ENCODE measurements at regions of chr2 and their contacts with region 1.

Region 1: DNA sequence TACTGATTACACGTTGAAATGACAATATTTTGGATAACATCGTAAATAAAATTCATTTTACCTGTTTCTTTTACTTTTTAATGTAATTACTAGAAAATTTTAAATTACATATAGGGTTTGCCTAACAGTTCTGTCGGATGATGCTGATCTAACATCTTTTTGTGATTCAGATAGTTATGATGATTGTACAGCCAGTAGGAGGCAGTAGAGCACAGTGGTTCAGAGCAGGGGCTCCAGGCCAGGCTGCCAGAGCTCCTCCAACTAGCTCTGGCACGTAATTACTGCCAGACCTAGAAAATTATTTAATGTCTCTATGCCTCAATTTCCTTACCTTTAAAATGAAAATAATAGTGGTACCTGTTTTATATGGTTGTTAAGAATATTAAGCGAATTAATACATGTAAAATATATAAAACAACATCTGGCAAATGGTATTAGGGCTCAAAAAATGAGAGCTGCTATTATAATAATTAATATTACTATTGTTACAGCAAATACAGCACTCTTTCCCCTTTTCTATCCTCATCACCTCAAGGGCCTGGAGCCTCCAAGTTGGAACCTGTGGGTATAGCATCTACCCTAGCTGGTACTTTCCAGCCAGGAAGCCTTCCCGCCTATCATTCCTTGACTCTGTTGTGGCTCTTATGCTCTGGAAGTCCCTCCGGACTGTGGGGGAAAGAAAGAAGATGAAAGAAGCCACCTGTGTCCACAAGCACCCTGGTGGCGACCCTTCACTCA is 47.7 kb upstream of the PLA2R1 start:
- DNase-seq: no peak
- H3K4me3 ChIP-seq: no peak overlapping the region
- H3K27ac ChIP-seq: no peak overlapping the region
- H3K4me1 ChIP-seq: no peaks in the 10 kb centered on the region
- H3K27me3 ChIP-seq: no peaks in the 10 kb centered on the region
- CTCF ChIP-seq: peak; percentile 80 to 82 (median 80)
- EP300 ChIP-seq: no peak
- POLR2A ChIP-seq: no peak

Region 2: DNA sequence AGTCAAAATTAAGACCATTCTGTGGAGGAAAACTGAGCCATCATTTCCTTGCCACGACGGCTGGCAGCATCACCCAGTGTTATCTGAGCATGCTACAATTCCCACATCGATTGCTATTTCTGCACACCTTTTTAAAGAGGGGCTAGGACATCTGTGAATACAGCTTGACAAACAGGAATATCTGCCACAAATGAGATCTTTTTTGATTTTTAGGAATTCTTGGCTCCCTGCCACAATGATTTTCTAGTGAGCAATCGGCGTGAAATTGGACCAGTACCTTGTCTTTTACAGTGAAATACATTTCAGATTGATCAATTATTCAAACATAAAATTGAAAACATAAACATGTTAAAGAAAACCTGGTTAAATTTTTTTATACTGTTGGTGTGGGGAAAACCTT is 160.3 kb before region 1 on chr2:
- intact Hi-C with region 1: no loop called
- DNase-seq: no peak
- H3K4me3 ChIP-seq: no peak overlapping the region
- H3K27ac ChIP-seq: no peak overlapping the region
- H3K4me1 ChIP-seq: peaks cover 4 to 9% (median 6%) of the 10 kb centered on the region in 4 donors
- H3K27me3 ChIP-seq: no peaks in the 10 kb centered on the region
- CTCF ChIP-seq: no peak
- EP300 ChIP-seq: no peak
- POLR2A ChIP-seq: no peak

Region 3: GRCh38 chr2:159960383-159960782 is 149.7 kb before region 1 on chr2:
- intact Hi-C with region 1: no loop called
- DNase-seq: no peak
- H3K4me3 ChIP-seq: no peak overlapping the region
- H3K27ac ChIP-seq: no peak overlapping the region
- H3K4me1 ChIP-seq: no peaks in the 10 kb centered on the region
- H3K27me3 ChIP-seq: no peaks in the 10 kb centered on the region
- CTCF ChIP-seq: no peak
- EP300 ChIP-seq: no peak
- POLR2A ChIP-seq: no peak

Region 4: GRCh38 chr2:160199683-160200389 is 89.7 kb after region 1 on chr2 and contains the start of gene ITGB6:
- intact Hi-C with region 1: no loop called
- DNase-seq: no peak
- H3K4me3 ChIP-seq: no peak within 1 kb of the TSS
- H3K27ac ChIP-seq: no peak within 1 kb of the TSS
- H3K4me1 ChIP-seq: no peaks in the 10 kb centered on the region
- H3K27me3 ChIP-seq: no peaks in the 10 kb centered on the region
- CTCF ChIP-seq: no peak
- EP300 ChIP-seq: no peak
- POLR2A ChIP-seq: no peak
- total RNA-seq, gene ITGB6: 0.17 to 3.4 TPM in 2 of 4 donors, not detected in the others

Region 5: GRCh38 chr2:160210599-160211138 is 100.6 kb after region 1 on chr2:
- intact Hi-C with region 1: loop called (anchors 10 kb)
- DNase-seq: no peak
- H3K4me3 ChIP-seq: no peak overlapping the region
- H3K27ac ChIP-seq: no peak overlapping the region
- H3K4me1 ChIP-seq: peaks cover 21 to 38% (median 32%) of the 10 kb centered on the region in 4 donors
- H3K27me3 ChIP-seq: no peaks in the 10 kb centered on the region
- CTCF ChIP-seq: peak; percentile 25 to 51 (median 30)
- EP300 ChIP-seq: no peak
- POLR2A ChIP-seq: no peak

Region 6: GRCh38 chr2:160994141-160995002 is 884.3 kb after region 1 on chr2:
- intact Hi-C with region 1: loop called (anchors 5 kb)
- DNase-seq: peak; percentile 96
- H3K4me3 ChIP-seq: peak overlapping the region in 2 of 4 donors; percentile 5 to 15
- H3K27ac ChIP-seq: no peak overlapping the region
- H3K4me1 ChIP-seq: peaks cover 7 to 19% (median 9%) of the 10 kb centered on the region in 4 donors
- H3K27me3 ChIP-seq: no peaks in the 10 kb centered on the region
- CTCF ChIP-seq: peak; percentile 87 to 92 (median 91)
- EP300 ChIP-seq: no peak
- POLR2A ChIP-seq: no peak

Region 7: GRCh38 chr2:161063157-161063954 is 953.3 kb after region 1 on chr2:
- intact Hi-C with region 1: loop called (anchors 2 kb)
- DNase-seq: peak; percentile 95
- H3K4me3 ChIP-seq: peak overlapping the region in 3 of 4 donors; percentile 7 to 16 (median 15)
- H3K27ac ChIP-seq: peak overlapping the region in 3 of 4 donors; percentile 25 to 43 (median 25)
- H3K4me1 ChIP-seq: peaks cover 5 to 18% (median 16%) of the 10 kb centered on the region in 4 donors
- H3K27me3 ChIP-seq: no peaks in the 10 kb centered on the region
- CTCF ChIP-seq: peak; percentile 86 to 96 (median 87)
- EP300 ChIP-seq: no peak
- POLR2A ChIP-seq: no peak

Measured in esophagus muscularis mucosa (tissue), 4 donors.